Mammary epithelial cell (primary cell): ENCODE measurements at regions of chr4 and their contacts with region 1.

Region 1: DNA sequence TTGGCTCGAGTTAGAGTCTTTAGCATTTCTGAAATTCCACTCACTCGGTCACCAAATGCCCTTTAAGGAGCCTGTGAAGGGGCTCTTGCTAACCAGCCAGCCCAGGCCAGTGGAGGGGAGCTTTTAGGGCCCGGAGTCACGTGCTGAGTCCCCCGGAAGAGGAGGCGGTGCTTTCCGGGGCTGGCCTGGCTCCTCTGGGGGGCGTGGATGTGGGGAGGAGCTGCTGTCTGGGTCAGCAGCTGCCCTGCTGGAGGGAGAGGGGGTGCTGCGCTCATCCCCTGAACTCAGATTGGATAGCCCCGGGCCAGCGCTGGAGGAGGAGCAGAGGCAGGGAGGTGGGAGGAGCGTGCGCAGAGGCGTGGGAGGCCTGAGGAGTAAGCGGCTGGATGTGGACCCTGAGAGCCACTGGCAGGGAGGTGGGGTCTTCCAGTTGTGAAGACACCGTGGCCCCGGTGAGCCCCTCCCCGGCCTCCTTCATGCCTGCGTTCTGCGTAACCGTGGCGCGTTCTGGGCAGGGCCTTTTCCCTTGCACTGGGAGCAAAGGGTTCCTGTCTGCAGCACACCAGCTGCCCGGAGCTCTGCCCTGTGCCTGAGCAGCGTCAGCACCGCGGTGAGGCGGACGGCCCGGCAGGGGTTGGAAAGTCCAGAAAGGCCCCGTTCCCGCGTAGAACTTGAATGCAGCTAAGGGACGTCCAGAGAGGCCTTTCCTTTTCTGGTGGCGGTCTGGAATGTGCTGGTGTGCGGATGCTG is 19.7 kb downstream of the MAEA start:
- DNase-seq: peak; percentile 88
- H3K4me3 ChIP-seq: peak overlapping the region; percentile 51 to 56 (median 53)
- H3K27ac ChIP-seq: peak overlapping the region; percentile 50
- H3K4me1 ChIP-seq: peaks cover 47% of the 10 kb centered on the region
- H3K27me3 ChIP-seq: no peaks in the 10 kb centered on the region
- CTCF ChIP-seq: no peak

Region 2: GRCh38 chr4:1243451-1244080 is 65.9 kb before region 1 on chr4:
- CTCF ChIA-PET with region 1: no interaction called
- dilution Hi-C with region 1: loop called (anchors 5 kb)
- in situ Hi-C with region 1: no loop called
- intact Hi-C with region 1: no loop called
- DNase-seq: no peak
- H3K4me3 ChIP-seq: no peak overlapping the region
- H3K27ac ChIP-seq: no peak overlapping the region
- H3K4me1 ChIP-seq: peaks cover 21% of the 10 kb centered on the region
- H3K27me3 ChIP-seq: no peaks in the 10 kb centered on the region
- CTCF ChIP-seq: no peak

Region 3: DNA sequence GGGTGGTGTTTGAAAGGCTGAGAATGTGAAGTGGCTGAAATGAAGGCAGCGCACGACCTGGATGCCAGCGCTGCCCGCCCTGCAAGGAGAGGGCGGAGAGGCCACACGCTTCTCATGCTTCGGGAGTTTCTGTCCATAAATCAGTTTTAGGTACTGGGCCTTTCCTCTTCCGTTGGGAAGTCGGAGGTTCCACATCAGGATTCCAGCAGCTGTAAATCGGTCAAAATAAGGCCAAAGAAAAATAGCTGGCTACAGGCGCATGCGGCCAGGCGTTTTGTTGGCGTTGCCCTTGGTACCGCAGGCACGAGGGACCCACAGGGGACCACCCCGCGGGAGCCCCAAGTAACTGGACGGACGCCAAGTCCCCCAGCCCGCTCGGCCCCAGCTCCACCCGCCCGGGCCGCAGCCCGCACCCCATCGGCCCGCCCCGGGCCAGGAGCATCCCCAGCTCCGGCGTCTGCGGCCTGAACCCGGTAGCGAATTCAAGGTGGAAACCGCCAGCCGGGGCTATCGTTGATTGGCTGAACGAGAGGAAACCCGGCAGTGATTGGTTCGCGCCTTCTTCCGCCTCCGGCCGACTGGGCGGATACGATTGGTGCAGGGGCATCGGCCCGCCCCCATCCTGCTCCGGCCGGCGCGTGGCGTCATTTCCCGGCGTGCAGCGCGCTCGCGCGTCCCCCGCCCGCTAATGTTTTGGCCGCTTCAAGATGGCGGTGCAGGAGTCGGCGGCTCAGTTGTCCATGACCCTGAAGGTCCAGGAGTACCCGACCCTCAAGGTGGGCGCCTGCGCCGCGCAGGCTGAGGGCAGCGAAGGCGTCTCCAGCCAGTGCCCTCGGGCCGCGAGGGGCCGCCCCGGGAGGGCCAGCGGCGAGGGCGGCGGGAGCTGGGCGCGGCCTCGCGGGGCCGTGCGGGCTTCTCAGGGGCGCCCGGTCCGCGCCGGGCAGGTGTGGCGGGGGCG is 19.9 kb before region 1 on chr4 and contains the start of gene MAEA:
- CTCF ChIA-PET with region 1: interaction called, 3 read pairs
- dilution Hi-C with region 1: no loop called
- in situ Hi-C with region 1: no loop called
- intact Hi-C with region 1: loop called (anchors 1 kb)
- DNase-seq: peak; percentile 96
- H3K4me3 ChIP-seq: peak within 1 kb of the TSS; percentile 77 to 94 (median 79)
- H3K27ac ChIP-seq: peak within 1 kb of the TSS; percentile 80
- H3K4me1 ChIP-seq: peaks cover 26% of the 10 kb centered on the region
- H3K27me3 ChIP-seq: no peaks in the 10 kb centered on the region
- CTCF ChIP-seq: no peak
- total RNA-seq, gene MAEA: 80.4 to 109 TPM

Region 4: DNA sequence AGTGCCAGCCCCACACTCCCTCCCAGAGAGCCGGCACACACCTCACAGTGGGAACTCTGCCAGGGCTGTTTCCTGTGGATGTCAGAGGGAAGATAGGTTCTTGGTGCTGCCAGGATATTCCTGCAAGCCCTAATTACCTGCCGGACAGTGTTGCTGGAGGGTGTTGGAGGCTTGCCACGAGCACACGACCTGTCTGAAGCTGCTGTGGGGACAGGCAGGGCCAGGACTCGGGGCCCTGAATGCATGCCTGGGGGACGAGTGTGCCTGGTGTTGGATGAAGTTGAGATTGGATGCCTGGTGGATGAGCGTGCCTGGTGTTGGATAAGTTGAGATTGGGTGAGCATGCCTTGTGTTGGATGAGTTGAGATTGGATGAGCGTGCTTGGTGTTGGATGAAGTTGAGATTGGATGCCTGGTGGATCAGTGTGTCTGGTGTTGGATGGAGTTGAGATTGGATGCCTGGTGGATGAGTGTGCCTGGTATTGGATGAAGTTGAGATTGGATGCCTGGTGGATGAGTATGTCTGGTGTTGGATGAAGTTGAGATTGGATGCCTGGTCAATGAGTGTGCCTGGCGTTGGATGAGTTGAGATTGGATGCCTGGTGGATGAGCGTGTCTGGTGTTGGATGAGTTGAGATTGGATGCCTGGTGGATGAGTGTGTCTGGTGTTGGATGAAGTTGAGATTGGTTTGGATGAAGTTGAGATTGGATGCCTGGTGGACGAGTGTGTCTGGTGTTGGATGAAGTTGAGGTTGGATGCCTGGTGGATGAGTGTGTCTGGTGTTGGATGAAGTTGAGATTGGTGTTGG is 14.4 kb after region 1 on chr4:
- CTCF ChIA-PET with region 1: no interaction called
- dilution Hi-C with region 1: no loop called
- in situ Hi-C with region 1: no loop called
- intact Hi-C with region 1: loop called (anchors 1 kb)
- DNase-seq: peak; percentile 98
- H3K4me3 ChIP-seq: no peak overlapping the region
- H3K27ac ChIP-seq: peak overlapping the region; percentile 46
- H3K4me1 ChIP-seq: peaks cover 45% of the 10 kb centered on the region
- H3K27me3 ChIP-seq: no peaks in the 10 kb centered on the region
- CTCF ChIP-seq: no peak

Region 5: DNA sequence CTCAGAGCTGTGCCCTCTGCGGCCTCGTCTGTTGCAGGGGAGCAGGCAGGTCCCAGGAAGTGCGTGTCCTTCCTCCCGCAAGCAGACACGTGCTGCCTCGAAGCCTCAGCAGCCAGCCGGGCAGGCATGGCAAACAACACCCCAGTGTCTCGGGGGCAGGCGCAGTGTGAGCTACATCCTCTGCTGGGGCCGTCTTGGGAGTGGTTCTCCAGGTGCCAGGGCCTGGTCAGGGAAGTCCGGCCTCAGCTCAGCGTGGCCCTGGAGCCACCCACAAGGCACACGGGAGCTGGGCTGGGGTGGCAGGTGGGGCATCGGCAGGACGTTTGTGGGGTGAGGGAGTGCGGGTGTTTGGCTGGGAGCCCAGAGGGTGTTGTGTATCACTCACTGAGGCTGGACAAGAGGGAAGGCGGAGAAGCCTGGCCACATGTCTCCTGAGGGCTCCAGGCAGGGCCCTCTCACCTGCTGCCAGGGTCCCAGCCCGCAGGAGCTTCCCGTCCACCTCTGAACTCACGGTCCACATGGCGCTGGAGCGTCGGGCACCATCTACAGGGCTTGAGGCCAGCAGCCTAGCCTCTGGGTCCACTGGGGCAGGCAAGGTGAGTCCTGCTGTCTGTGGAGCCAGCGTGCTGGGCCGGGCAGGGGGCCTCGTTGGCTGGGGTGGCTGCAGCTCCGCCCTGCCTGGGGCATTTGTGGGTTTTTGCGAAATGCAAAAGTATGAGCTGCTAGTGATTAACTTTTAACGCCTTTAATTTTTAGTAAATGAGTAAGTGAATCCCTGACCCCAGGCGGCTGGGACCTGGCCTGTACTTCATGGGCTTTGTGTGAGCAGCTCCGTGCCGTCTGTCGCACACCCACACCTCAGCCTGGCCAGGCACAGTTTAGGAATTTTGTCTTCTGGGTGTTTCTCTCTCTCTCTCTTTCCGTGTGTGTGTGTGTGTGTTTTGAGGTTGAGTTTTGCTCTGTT is 20.3 kb after region 1 on chr4:
- CTCF ChIA-PET with region 1: no interaction called
- dilution Hi-C with region 1: no loop called
- in situ Hi-C with region 1: no loop called
- intact Hi-C with region 1: loop called (anchors 1 kb)
- DNase-seq: peak; percentile 94
- H3K4me3 ChIP-seq: no peak overlapping the region
- H3K27ac ChIP-seq: peak overlapping the region; percentile 69
- H3K4me1 ChIP-seq: peaks cover 40% of the 10 kb centered on the region
- H3K27me3 ChIP-seq: no peaks in the 10 kb centered on the region
- CTCF ChIP-seq: no peak